Upper lobe of right lung (tissue), 1 donor: ENCODE measurements at regions of chr13 and their contacts with region 1.

Region 1: GRCh38 chr13:59677966-59678814 is 485.5 kb downstream of the DIAPH3 start:
- DNase-seq: no peak
- ATAC-seq: peak; percentile 77
- H3K4me3 ChIP-seq: no peak overlapping the region
- H3K27ac ChIP-seq: no peak overlapping the region
- H3K4me1 ChIP-seq: no peaks in the 10 kb centered on the region
- H3K27me3 ChIP-seq: no peaks in the 10 kb centered on the region
- CTCF ChIP-seq: peak; percentile 80

Region 2: GRCh38 chr13:59391696-59392095 is 286.5 kb before region 1 on chr13:
- intact Hi-C with region 1: loop called (anchors 2 kb)
- DNase-seq: no peak
- ATAC-seq: peak; percentile 96
- H3K4me3 ChIP-seq: no peak overlapping the region
- H3K27ac ChIP-seq: peak overlapping the region; percentile 44
- H3K4me1 ChIP-seq: no peaks in the 10 kb centered on the region
- H3K27me3 ChIP-seq: no peaks in the 10 kb centered on the region
- CTCF ChIP-seq: peak; percentile 87

Region 3: GRCh38 chr13:59587971-59588716 is 90.0 kb before region 1 on chr13:
- intact Hi-C with region 1: no loop called
- DNase-seq: no peak
- ATAC-seq: no peak
- H3K4me3 ChIP-seq: no peak overlapping the region
- H3K27ac ChIP-seq: no peak overlapping the region
- H3K4me1 ChIP-seq: no peaks in the 10 kb centered on the region
- H3K27me3 ChIP-seq: no peaks in the 10 kb centered on the region
- CTCF ChIP-seq: no peak

Region 4: GRCh38 chr13:60163478-60164233 is 485.5 kb after region 1 on chr13 and contains the start of gene DIAPH3:
- intact Hi-C with region 1: no loop called
- DNase-seq: peak; percentile 98
- ATAC-seq: peak; percentile 100
- H3K4me3 ChIP-seq: peak within 1 kb of the TSS; percentile 79
- H3K27ac ChIP-seq: peak within 1 kb of the TSS; percentile 94
- H3K4me1 ChIP-seq: peaks cover 18% of the 10 kb centered on the region
- H3K27me3 ChIP-seq: no peaks in the 10 kb centered on the region
- CTCF ChIP-seq: no peak
- total RNA-seq, gene DIAPH3: 4.6 TPM